ENCODE measurements at regions of chr7 and their contacts with region 1.

Region 1: GRCh38 chr7:28921822-28922221 is 36.3 kb downstream of the TRIL start:
- DNase-seq: no peak
- ATAC-seq: peak; percentile 98

Region 2: DNA sequence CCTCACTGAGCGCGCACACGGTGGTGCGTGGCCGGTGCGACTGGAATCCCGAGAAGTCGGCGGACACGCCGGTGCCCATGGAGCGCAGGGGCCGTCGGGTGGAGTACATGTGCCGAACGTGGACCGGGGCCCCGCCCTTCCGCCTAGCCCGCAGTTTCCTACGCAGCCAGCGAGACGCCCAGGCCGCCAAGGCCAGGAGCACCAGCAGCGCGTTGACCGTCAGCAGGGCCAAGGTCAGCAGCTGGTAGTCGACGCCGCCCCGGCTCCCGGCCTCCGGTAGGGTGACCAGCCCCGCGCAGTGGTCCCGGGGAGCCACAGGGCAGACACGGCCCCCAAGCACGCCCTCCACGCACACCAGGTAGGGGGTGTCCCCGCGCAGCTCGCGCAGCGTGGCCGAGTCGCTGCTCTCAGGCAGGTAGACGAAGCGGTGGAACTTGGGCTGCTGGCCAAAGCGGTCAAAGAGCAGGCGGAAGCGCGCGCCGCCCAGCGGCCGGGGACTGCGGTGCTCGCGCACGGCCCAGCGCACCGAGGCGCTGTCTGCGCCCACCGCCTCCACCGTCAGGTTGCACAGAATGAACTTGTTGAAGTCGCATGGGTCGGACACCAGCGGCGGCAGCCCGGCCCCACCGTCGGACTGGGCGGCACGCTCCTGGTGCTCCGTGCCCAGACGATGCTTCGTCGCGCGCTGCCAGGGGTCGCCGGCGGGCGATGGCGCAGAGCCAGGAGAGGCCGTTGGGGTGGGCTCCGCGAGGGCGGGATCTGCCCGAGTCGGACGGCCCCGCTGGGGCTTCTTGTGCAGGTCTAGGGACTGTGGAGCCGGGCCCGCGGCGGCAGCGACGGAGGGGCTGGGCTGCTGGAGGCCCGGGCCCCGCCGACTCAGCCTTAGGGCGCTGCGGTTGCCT is 34.1 kb after region 1 on chr7:
- intact Hi-C with region 1: loop called (anchors 5 kb)
- DNase-seq: peak; percentile 87
- ATAC-seq: peak; percentile 70

Region 3: GRCh38 chr7:29084832-29085231 is 163.0 kb after region 1 on chr7:
- intact Hi-C with region 1: no loop called
- DNase-seq: no peak
- ATAC-seq: peak; percentile 36